Activated naive CD4-positive, alpha-beta T cell treated with anti-CD3 and anti-CD28 coated beads, Interleukin-2, amount 10 ng/mL, durations not matched to agents 7 days and 5 days (primary cell): ENCODE measurements at regions of chr11 and their contacts with region 1.

Region 1: GRCh38 chr11:63838678-63839507 is at the start of gene MARK2:
- DNase-seq: peak; percentile 99
- H3K4me3 Mint-ChIP-seq: peak within 1 kb of the TSS; percentile 89
- H3K27ac Mint-ChIP-seq: peak within 1 kb of the TSS; percentile 90
- H3K4me1 Mint-ChIP-seq: peaks cover 48% of the 10 kb centered on the region
- H3K27me3 Mint-ChIP-seq: no peaks in the 10 kb centered on the region

Region 2: GRCh38 chr11:63592975-63593395 is 245.9 kb before region 1 on chr11:
- CTCF ChIA-PET with region 1: no interaction called
- DNase-seq: peak; percentile 25
- H3K4me3 Mint-ChIP-seq: no peak overlapping the region
- H3K27ac Mint-ChIP-seq: no peak overlapping the region
- H3K4me1 Mint-ChIP-seq: no peaks in the 10 kb centered on the region
- H3K27me3 Mint-ChIP-seq: peaks cover 4% of the 10 kb centered on the region

Region 3: GRCh38 chr11:63871962-63872799 is 33.3 kb after region 1 on chr11:
- CTCF ChIA-PET with region 1: interaction called, 51 read pairs
- DNase-seq: peak; percentile 65
- H3K4me3 Mint-ChIP-seq: no peak overlapping the region
- H3K27ac Mint-ChIP-seq: peak overlapping the region; percentile 49
- H3K4me1 Mint-ChIP-seq: peaks cover 73% of the 10 kb centered on the region
- H3K27me3 Mint-ChIP-seq: no peaks in the 10 kb centered on the region

Region 4: DNA sequence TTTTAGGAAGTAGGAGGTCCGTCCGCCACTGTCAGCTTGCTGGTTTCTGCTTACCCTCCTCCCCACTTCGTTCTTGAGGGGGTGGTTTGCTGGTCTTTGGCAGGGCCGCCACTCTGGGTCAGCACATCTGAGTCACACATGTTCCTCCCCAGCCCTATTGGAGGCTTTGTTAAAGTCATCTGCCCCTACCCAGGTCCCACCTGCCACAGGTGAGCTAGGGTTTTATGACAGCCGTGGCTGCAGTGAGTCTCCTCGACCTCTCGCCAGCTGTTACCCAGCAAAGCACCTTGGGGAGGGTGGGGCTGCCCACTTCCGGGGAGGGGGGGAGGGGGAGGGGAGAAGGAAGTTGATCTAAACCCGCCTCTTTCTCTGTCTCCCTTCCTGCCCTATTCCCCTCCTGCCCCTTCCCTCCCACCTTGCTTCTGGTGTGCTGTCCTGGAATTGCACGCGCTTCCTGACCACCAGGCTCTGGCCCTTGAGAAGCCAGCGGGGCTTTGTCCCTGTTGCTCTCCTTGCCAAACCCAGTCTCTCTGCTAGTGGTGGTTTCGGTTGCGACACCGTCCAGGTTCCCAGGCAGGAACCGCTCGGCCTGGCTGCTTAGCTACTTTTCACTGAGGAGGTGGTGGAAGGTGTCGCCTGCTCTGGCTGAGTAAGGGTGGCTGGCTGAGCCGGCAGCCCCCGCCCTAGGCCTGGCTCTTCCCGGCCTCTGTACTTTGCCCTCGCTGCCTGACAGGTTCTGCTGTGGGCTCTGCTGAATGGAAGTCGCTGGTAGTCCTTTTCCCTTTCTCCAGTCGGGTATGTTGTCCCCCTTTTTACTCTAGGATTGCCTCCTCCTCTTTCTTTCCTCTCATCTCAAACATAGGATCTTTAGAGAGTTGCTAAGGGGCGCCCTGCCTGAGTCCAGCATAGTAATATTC is 49.5 kb after region 1 on chr11:
- CTCF ChIA-PET with region 1: interaction called, 27 read pairs
- DNase-seq: peak; percentile 84
- H3K4me3 Mint-ChIP-seq: peak overlapping the region; percentile 95
- H3K27ac Mint-ChIP-seq: peak overlapping the region; percentile 88
- H3K4me1 Mint-ChIP-seq: peaks cover 80% of the 10 kb centered on the region
- H3K27me3 Mint-ChIP-seq: no peaks in the 10 kb centered on the region

Region 5: GRCh38 chr11:63920939-63921417 is 82.1 kb after region 1 on chr11:
- CTCF ChIA-PET with region 1: interaction called, 36 read pairs
- DNase-seq: no peak
- H3K4me3 Mint-ChIP-seq: no peak overlapping the region
- H3K27ac Mint-ChIP-seq: no peak overlapping the region
- H3K4me1 Mint-ChIP-seq: peaks cover 15% of the 10 kb centered on the region
- H3K27me3 Mint-ChIP-seq: peaks cover 94% of the 10 kb centered on the region

Region 6: DNA sequence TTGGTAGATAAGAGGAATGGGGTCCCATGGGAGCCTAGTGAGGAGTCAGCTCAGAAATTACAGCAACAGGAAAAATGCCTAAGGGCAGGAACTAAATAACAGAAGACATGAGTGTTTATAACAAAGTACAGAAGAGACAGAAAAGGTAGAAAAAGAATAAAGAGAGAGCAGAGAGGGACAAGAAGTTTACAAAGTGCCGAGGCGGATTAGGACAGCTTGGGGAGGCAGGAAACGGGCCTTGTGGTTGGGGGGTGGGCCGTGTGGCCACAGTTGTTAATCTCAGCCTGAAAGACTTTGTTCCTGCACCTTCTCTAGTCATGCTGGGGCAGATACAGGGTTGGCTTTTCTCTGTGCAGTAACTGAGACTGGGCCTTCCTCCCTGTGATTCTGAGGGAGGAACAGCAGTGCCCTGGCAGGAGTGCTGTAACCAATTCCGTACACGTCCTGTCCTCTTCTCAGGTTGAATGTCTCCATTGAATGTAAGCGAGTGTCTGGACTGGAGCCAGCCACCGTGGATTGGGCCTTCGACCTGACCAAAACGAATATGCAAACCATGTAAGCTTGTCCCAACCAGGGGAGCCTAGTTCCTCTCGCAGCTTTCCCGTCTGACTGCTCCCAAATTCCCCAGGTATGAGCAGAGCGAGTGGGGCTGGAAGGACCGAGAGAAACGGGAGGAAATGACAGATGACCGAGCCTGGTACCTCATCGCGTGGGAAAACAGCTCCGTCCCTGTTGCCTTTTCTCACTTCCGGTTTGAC is 113.1 kb after region 1 on chr11:
- CTCF ChIA-PET with region 1: interaction called, 150 read pairs
- DNase-seq: peak; percentile 76
- H3K4me3 Mint-ChIP-seq: peak overlapping the region; percentile 44
- H3K27ac Mint-ChIP-seq: peak overlapping the region; percentile 85
- H3K4me1 Mint-ChIP-seq: peaks cover 33% of the 10 kb centered on the region
- H3K27me3 Mint-ChIP-seq: no peaks in the 10 kb centered on the region

Region 7: GRCh38 chr11:64152841-64153691 is 314.2 kb after region 1 on chr11:
- CTCF ChIA-PET with region 1: interaction called, 13 read pairs
- DNase-seq: peak; percentile 76
- H3K4me3 Mint-ChIP-seq: no peak overlapping the region
- H3K27ac Mint-ChIP-seq: no peak overlapping the region
- H3K4me1 Mint-ChIP-seq: peaks cover 6% of the 10 kb centered on the region
- H3K27me3 Mint-ChIP-seq: peaks cover 11% of the 10 kb centered on the region